Activated CD8-positive, alpha-beta memory T cell treated with anti-CD3 and anti-CD28 coated beads, Interleukin-2, amount 10 ng/mL, durations not matched to agents 7 days and 5 days (primary cell): ENCODE measurements at regions of chr17 and their contacts with region 1.

Region 1: DNA sequence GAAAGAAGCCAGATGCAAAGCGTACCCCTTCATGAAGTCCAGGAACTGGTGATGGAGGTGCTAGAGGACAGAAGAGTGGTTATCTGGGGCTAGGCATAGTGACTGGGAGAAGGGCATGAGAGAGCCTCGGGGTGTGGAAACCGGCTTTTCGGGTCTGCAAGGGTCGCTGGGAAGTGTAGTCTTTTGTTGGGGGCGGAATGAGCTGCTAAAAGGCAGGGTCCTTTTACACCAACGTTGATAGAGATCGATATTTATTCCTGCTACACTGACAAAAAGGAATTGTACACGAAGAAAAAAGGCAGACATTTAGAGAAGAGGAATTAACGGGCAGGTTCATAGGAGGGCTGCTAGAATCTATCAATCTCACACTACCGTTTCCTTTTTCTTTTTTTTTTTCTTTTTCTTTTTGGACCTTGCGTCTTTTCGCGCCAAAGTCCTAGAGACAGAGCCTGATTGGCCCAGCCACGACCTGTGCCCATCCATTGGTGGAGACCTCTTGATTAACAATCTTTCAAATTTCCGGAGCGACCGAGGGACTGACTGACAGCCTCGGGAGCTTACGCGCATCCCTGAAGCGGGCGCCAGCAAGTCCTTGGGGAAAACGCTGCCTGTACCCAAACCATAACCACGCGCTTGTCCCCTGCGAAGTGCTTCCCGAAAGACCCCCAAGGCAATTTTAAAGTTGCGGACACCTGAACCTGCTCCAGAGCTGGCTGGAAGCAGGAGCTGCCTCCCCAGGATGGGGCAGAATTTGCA is 27.7 kb upstream of the DHRS7B start:
- DNase-seq: peak; percentile 92
- ATAC-seq: peak; percentile 99
- H3K4me3 Mint-ChIP-seq: peak overlapping the region; percentile 88
- H3K27ac Mint-ChIP-seq: peak overlapping the region; percentile 94
- H3K4me1 Mint-ChIP-seq: peaks cover 18% of the 10 kb centered on the region
- H3K27me3 Mint-ChIP-seq: no peaks in the 10 kb centered on the region

Region 2: GRCh38 chr17:21019976-21020586 is 79.0 kb before region 1 on chr17:
- CTCF ChIA-PET with region 1: interaction called, 15 read pairs
- DNase-seq: peak; percentile 71
- ATAC-seq: peak; percentile 67
- H3K4me3 Mint-ChIP-seq: no peak overlapping the region
- H3K27ac Mint-ChIP-seq: peak overlapping the region; percentile 33
- H3K4me1 Mint-ChIP-seq: peaks cover 25% of the 10 kb centered on the region
- H3K27me3 Mint-ChIP-seq: no peaks in the 10 kb centered on the region

Region 3: GRCh38 chr17:21034340-21035235 is 64.5 kb before region 1 on chr17:
- CTCF ChIA-PET with region 1: interaction called, 11 read pairs
- DNase-seq: peak; percentile 82
- ATAC-seq: peak; percentile 74
- H3K4me3 Mint-ChIP-seq: peak overlapping the region; percentile 69
- H3K27ac Mint-ChIP-seq: peak overlapping the region; percentile 94
- H3K4me1 Mint-ChIP-seq: peaks cover 73% of the 10 kb centered on the region
- H3K27me3 Mint-ChIP-seq: no peaks in the 10 kb centered on the region

Region 4: DNA sequence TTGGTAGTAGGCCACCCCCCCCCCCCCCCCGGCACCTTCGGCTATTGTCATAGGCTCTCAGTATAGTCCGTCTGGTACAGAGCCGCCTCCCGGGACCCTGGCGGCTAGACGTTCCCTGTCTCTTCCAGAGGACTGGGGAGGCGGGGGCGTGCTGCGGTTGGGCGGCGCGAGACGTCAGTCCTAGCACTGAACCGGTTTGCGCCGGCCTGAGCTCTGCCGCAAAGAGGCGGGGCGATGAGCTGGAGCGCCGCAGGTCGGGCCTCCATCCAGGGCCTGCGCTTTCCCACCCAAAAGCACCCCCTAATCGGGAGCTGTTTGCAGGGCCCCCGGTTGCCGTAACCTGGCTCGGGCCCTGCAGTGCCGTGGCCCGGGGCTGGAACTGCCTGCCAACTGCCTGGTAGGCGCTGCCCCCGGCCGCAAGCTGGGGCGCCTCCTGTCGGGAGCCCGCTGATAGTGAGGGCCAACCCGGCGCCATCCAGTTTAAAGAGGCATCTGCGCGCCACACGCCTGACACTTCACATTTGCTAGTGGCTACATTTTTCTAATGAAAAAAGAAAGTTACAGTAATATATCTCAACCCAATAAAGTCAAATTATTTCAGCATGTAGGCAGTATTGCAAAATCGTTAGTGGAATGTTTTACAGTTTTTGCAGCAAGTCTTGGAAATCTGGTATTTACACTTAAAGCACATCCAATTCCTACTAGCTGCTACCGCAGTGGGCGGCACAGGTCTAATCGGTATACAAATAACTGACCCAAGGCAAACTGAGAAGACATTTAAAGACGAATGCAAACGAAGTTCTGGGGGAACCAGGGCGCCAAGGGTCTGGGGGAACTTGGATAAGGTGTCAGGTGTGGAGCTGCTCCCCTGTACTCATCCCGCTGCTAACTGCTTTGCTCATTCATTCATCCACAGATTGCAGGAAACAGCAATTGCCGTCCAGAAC is 55.6 kb before region 1 on chr17:
- CTCF ChIA-PET with region 1: interaction called, 41 read pairs
- DNase-seq: peak; percentile 99
- ATAC-seq: peak; percentile 84
- H3K4me3 Mint-ChIP-seq: peak overlapping the region; percentile 73
- H3K27ac Mint-ChIP-seq: peak overlapping the region; percentile 86
- H3K4me1 Mint-ChIP-seq: peaks cover 27% of the 10 kb centered on the region
- H3K27me3 Mint-ChIP-seq: peaks cover 2% of the 10 kb centered on the region

Region 5: GRCh38 chr17:21119247-21119918 is 20.3 kb after region 1 on chr17:
- CTCF ChIA-PET with region 1: interaction called, 13 read pairs
- DNase-seq: peak; percentile 77
- ATAC-seq: peak; percentile 88
- H3K4me3 Mint-ChIP-seq: peak overlapping the region; percentile 3
- H3K27ac Mint-ChIP-seq: no peak overlapping the region
- H3K4me1 Mint-ChIP-seq: peaks cover 8% of the 10 kb centered on the region
- H3K27me3 Mint-ChIP-seq: peaks cover 10% of the 10 kb centered on the region

Region 6: DNA sequence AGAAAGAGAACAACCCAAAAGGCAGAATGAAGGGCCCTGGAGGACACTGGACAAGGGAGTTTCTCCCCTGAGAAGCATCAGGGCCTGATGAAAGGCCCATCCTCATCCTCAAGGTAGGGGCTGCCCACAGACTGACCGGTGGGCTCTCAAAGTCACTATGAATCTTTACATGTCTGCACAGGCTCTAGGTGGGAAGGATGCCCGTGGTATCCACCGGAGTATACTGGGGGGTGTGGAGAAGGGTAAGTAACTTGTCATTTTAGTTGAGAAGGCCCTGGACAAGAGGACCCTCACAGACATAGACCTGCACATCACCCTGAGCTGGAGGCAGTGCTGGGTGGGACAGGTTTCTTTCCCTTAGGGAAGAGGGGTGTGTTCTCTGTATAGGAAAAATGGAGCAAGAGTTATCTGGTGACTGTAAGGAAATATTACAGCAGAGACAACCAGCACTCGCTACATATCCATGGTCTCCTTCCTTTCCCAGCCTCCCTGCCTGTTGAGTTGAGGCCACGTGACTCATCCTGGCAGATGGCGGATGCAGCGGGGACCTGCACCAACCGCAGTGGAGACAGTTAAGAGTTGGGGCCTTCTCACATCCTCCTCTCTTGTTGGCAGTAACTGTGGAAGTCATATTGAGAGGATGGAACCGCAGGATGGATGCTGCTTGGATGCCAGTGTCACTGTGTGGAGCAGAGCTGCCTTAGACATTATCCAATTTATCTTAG is 231.5 kb after region 1 on chr17:
- CTCF ChIA-PET with region 1: no interaction called
- DNase-seq: no peak
- ATAC-seq: no peak
- H3K4me3 Mint-ChIP-seq: no peak overlapping the region
- H3K27ac Mint-ChIP-seq: no peak overlapping the region
- H3K4me1 Mint-ChIP-seq: peaks cover under 1% of the 10 kb centered on the region
- H3K27me3 Mint-ChIP-seq: peaks cover 5% of the 10 kb centered on the region